ENCODE measurements at regions of chr2 and their contacts with region 1.

Region 1: GRCh38 chr2:156341452-156342253 is 9.1 kb upstream of the NR4A2 start:
- H3K4me3 Mint-ChIP-seq: peak overlapping the region; percentile 96
- H3K27ac Mint-ChIP-seq: peak overlapping the region; percentile 100
- H3K4me1 Mint-ChIP-seq: peaks cover 19% of the 10 kb centered on the region
- H3K27me3 Mint-ChIP-seq: no peaks in the 10 kb centered on the region

Region 2: GRCh38 chr2:156411835-156412234 is 70.2 kb after region 1 on chr2:
- intact Hi-C with region 1: no loop called
- H3K4me3 Mint-ChIP-seq: no peak overlapping the region
- H3K27ac Mint-ChIP-seq: no peak overlapping the region
- H3K4me1 Mint-ChIP-seq: peaks cover under 1% of the 10 kb centered on the region
- H3K27me3 Mint-ChIP-seq: peaks cover 2% of the 10 kb centered on the region

Region 3: GRCh38 chr2:156435715-156436496 is 94.3 kb after region 1 on chr2 and contains the start of gene GPD2:
- intact Hi-C with region 1: loop called (anchors 1 kb)
- H3K4me3 Mint-ChIP-seq: peak within 1 kb of the TSS; percentile 83
- H3K27ac Mint-ChIP-seq: peak within 1 kb of the TSS; percentile 95
- H3K4me1 Mint-ChIP-seq: peaks cover 54% of the 10 kb centered on the region
- H3K27me3 Mint-ChIP-seq: no peaks in the 10 kb centered on the region

Measured in dendritic cell treated with granulocyte-macrophage colony-stimulating factor and Interleukin-4, amounts not matched to agents 40 ng/mL and 50 ng/mL, for 4 days (primary cell).